ENCODE measurements at regions of chr9 and their contacts with region 1.

Region 1: GRCh38 chr9:137590462-137591383 is at the start of gene ZMYND19:
- DNase-seq: peak; percentile 87
- H3K4me3 Mint-ChIP-seq: peak within 1 kb of the TSS; percentile 79
- H3K27ac Mint-ChIP-seq: peak within 1 kb of the TSS; percentile 70
- H3K4me1 Mint-ChIP-seq: no peaks in the 10 kb centered on the region
- H3K27me3 Mint-ChIP-seq: no peaks in the 10 kb centered on the region
- CTCF ChIP-seq: no peak
- total RNA-seq, gene ZMYND19: 42.9 and 51.9 TPM in 2 replicates

Region 2: DNA sequence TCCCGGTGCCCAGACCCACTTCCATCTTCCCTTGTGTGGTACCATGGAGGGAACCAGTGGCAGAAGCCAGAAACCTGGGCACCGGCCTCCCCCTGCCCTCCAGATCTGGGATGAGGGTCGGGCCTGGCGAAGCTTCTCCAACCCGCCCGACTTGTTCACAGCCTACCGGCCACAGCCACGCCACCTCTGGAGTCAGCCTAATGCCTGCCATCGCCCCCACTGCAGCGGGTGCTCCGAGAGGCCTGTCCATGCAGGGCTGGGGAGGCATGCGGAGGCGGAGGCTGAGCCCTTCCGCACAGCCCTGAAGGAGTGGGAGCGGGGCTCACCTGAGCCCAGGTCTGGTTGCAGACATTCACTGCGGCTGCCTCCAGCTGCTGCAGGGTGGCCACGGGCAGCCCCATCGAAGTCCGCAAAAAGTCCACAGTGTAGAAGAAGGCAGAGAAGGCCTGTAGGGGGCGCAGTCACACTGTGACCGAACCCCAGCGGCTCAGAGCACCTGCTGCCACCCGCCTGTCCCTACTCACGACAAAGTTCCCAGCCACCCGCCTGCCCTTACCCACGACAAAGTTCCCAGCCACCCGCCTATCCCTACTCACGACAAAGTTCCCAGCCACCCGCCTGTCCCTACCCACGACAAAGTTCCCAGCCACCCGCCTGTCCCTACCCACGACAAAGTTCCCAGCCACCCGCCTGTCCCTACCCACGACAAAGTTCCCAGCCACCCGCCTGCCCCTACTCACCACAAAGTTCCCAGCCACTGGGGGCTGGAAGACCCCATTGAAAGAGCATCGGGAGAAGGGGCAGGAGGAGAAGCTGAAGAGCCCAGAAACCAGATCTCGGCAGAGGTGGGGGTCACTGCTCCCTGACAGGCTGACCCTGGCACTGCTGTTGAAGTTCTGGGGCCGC is 540.9 kb before region 1 on chr9:
- CTCF ChIA-PET with region 1: no interaction called
- POLR2A ChIA-PET with region 1: no interaction called
- intact Hi-C with region 1: no loop called
- DNase-seq: peak; percentile 61
- H3K4me3 Mint-ChIP-seq: no peak overlapping the region
- H3K27ac Mint-ChIP-seq: no peak overlapping the region
- H3K4me1 Mint-ChIP-seq: no peaks in the 10 kb centered on the region
- H3K27me3 Mint-ChIP-seq: no peaks in the 10 kb centered on the region
- CTCF ChIP-seq: peak; percentile 56

Region 3: DNA sequence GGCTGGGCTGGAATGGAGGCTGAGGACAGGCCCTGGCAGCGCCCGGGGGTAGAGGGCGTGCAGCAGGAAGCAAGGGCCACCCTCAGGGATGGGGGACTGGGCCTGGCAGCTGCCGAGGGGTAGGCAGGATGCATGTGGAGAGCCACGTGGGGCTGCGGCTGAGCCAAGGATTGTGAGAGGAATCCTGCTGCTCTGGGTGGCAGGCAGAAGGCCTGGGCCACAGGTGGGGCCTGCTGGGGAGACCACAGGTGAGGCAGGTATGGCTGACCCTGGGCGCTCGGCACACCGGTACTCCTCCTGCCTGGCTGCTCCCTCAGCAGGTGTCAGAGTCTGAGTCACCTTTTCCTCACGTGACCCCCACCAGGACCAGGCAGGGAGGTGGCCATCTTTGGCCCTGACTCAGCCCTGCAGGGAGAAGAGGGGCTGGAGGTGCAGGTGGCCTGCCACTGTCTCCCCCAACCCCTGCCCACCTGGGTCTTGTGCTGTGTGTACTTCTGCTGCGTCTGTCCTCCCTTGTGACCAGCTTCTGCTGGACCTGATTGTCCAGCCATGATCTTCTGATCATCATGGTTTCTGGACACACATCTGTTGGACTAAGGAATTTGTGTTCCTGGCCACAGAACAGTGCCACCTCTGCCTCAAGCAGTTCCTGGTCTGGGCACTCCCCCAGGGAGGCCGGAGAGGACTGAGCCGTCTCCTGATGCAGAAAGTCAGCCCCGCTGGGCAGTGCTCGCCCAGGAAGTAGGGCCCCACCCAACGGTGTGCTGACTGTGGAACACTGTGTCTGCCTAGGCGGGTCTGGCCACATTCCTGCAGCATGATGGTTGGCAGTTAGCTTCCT is 21.1 kb after region 1 on chr9:
- CTCF ChIA-PET with region 1: interaction called, 3 read pairs
- POLR2A ChIA-PET with region 1: interaction called, 16 read pairs
- intact Hi-C with region 1: no loop called
- DNase-seq: peak; percentile 94
- H3K4me3 Mint-ChIP-seq: peak overlapping the region; percentile 72
- H3K27ac Mint-ChIP-seq: peak overlapping the region; percentile 96
- H3K4me1 Mint-ChIP-seq: peaks cover 32% of the 10 kb centered on the region
- H3K27me3 Mint-ChIP-seq: no peaks in the 10 kb centered on the region
- CTCF ChIP-seq: no peak

Measured in MCF 10A (cell line).